Calu3 (cell line): ENCODE measurements at regions of chr11 and their contacts with region 1.

Region 1: DNA sequence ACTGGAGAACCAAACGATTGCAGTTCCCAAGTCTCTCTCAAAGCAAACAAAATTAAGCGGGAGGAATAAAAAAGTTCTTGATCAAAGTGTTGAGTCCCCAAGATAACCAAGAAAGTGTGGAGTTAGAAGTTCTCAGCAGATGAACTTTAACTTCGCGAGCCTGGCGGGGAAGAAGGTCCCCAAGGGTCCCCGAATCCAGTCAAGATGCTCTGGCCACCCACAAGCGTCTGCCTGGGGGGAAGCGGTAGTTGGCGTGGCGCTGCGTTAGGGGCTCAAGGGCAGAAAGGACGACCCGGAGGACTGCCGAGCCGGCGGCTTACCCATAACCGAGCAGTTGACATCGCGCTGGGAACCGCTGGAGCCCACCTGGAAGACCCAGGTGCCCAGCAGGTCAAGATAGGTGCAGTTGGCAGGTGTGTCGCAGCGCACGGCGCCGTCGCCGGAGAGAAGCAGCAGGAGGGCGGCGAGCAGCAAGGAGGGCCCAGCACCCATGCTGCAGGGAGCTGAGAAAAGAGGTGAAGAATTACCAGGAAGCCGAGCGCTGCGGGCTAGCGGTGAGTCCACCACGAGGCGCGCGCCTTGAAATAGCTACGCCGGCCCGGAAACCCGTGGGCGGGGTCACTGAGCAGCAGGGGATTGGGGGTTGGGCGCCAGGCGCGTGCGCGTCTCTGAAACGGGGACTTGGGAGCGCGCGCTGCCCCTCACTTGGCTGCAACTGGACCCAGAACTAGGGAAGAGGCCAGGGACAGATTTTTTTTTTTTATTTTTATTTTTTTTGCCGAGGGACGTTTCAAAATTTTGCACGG is at the start of gene CTSC:
- DNase-seq: peak; percentile 94
- H3K4me3 Mint-ChIP-seq: peak within 1 kb of the TSS; percentile 97
- H3K27ac Mint-ChIP-seq: peak within 1 kb of the TSS; percentile 74
- H3K4me1 Mint-ChIP-seq: peaks cover 16% of the 10 kb centered on the region
- H3K27me3 Mint-ChIP-seq: no peaks in the 10 kb centered on the region
- CTCF ChIP-seq: no peak
- total RNA-seq, gene CTSC: 413 and 478 TPM in 2 replicates

Region 2: DNA sequence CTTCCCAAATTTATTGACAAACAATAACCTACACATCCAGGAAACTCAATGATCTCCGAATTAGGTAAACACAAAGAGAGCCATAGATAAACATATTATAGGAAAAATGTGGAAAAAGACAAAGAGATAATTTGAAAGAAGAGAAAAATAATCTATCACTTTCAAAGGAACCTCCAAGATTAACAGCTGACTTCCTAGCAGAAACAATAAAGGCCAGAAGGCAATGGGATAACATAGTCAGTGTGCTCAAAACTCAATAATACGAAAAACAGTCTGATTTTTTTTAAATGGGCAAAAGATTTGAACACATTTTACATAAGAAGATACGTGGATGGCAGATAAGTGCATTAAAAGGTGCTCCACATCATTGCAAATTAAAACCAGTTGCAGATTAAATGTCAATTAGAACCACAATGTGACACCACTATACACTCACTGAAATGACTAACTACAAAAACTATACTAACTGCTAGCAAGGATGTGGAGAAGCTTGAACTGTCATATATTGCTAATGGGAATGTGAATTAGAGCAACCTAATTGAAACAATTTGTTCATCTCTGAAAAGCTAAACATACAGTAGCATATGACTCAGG is 999.2 kb before region 1 on chr11:
- CTCF ChIA-PET with region 1: no interaction called
- intact Hi-C with region 1: no loop called
- DNase-seq: no peak
- H3K4me3 Mint-ChIP-seq: no peak overlapping the region
- H3K27ac Mint-ChIP-seq: no peak overlapping the region
- H3K4me1 Mint-ChIP-seq: no peaks in the 10 kb centered on the region
- H3K27me3 Mint-ChIP-seq: no peaks in the 10 kb centered on the region
- CTCF ChIP-seq: no peak

Region 3: DNA sequence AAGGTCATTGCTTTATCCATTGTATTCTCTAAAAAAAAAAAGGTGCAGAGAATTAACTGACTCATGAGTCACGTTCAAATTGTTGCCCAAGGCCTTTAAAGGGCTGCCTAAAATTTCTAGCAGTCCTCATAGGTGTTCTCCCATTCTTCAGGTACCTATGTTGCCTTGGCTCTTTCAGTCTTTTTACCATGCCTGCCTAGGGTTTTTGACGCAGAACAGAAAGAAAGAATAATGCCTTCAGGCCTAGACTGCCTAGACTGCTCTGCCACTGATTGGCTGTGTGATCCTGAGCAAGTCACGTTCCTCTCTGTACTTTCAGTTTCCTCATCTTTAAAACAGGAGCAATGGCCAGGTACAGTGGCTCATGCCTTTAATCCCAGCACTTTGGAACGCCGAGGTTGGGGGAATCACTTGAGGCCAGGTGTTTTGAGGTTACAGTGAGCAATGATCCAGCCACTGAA is 21.4 kb before region 1 on chr11:
- CTCF ChIA-PET with region 1: interaction called, 4 read pairs
- intact Hi-C with region 1: loop called (anchors 2 kb)
- DNase-seq: no peak
- H3K4me3 Mint-ChIP-seq: peak overlapping the region; percentile 46
- H3K27ac Mint-ChIP-seq: peak overlapping the region; percentile 68
- H3K4me1 Mint-ChIP-seq: peaks cover 33% of the 10 kb centered on the region
- H3K27me3 Mint-ChIP-seq: no peaks in the 10 kb centered on the region
- CTCF ChIP-seq: no peak

Region 4: DNA sequence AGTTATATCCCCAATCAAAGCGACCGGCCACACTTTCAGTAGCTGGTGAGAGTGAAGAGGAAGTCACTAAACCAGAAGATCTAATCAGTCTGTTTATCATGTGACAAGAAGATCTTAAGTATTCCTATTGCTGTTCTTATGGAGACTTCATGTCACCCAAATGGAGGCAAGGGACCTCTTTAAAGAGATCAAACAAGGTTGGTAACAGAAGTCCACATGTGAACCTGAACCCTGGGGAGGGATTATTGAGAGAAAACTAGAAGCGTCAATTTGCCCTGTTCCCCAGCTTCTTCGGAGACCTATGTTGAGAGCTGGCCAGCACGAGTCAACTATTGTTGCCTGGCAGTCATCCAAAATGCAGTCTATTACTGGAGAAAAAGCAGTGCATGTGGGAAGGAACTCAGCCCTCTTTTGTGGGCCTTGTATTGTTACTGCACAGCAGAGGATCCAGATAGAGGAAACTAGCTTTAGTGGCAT is 77.0 kb after region 1 on chr11:
- CTCF ChIA-PET with region 1: no interaction called
- intact Hi-C with region 1: loop called (anchors 5 kb)
- DNase-seq: peak; percentile 18
- H3K4me3 Mint-ChIP-seq: no peak overlapping the region
- H3K27ac Mint-ChIP-seq: peak overlapping the region; percentile 29
- H3K4me1 Mint-ChIP-seq: peaks cover 42% of the 10 kb centered on the region
- H3K27me3 Mint-ChIP-seq: no peaks in the 10 kb centered on the region
- CTCF ChIP-seq: no peak